OCI-LY7 (cell line): ENCODE measurements at regions of chr22 and their contacts with region 1.

Region 1: GRCh38 chr22:33271390-33272161 is 213.4 kb upstream of the SYN3 start:
- DNase-seq: peak; percentile 99
- H3K4me3 ChIP-seq: peak overlapping the region; percentile 53
- H3K27ac ChIP-seq: peak overlapping the region; percentile 99
- H3K4me1 ChIP-seq: peaks cover 74% of the 10 kb centered on the region
- CTCF ChIP-seq: peak; percentile 45

Region 2: DNA sequence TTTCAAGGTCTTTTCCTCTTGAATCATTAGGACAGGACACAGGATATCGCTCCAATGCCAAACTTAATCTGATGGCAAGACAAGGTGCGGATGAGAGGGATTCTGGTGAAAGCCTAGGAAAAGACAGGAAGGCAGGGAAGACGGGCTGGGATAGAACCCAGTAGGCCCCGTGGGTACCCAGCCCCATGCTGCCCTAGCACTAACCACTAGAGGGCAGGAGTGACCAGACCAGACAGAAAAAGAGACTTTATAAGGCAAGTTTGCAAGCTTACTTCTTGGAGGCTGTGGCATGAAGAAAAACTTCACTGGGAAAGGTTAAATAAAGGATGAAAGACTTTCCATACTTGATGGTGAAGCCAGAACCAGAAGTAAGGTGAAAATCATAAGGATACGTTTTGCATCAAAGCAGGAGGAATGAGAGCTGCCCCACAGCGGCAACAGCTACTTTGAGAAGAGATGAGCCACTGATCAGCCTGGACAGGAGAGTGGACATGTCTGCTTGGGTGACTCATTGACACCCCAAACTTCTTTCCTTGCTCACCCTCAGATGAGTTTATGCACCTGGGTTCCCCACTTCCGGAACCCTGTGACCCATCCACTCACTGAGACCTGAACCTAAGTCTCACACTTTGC is 253.2 kb before region 1 on chr22:
- CTCF ChIA-PET with region 1: no interaction called
- POLR2A ChIA-PET with region 1: no interaction called
- intact Hi-C with region 1: loop called (anchors 5 kb)
- DNase-seq: peak; percentile 71
- H3K4me3 ChIP-seq: no peak overlapping the region
- H3K27ac ChIP-seq: no peak overlapping the region
- H3K4me1 ChIP-seq: peaks cover 18% of the 10 kb centered on the region
- CTCF ChIP-seq: peak; percentile 98

Region 3: DNA sequence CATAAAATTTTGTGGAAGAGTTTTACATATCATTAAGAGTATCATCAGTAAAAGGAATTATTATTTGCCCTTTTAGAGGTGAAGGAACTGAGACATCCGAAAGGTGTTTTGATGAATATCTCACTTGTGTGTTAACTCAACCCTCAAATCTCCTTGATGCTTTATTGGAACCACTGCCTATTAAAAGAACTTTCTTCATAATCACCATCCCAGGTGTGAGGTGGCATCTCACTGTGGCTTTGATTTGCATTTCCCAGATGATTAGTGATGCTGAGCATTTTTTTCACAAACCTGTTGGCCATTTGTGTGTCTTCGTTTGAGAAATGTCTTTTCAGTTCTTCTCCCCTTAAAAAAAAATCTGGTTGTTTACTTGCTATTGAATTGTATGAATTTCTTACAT is 79.4 kb before region 1 on chr22:
- CTCF ChIA-PET with region 1: no interaction called
- POLR2A ChIA-PET with region 1: interaction called, 4 read pairs
- intact Hi-C with region 1: loop called (anchors 1 kb)
- DNase-seq: peak; percentile 96
- H3K4me3 ChIP-seq: peak overlapping the region; percentile 49
- H3K27ac ChIP-seq: peak overlapping the region; percentile 98
- H3K4me1 ChIP-seq: peaks cover 70% of the 10 kb centered on the region
- CTCF ChIP-seq: no peak

Region 4: DNA sequence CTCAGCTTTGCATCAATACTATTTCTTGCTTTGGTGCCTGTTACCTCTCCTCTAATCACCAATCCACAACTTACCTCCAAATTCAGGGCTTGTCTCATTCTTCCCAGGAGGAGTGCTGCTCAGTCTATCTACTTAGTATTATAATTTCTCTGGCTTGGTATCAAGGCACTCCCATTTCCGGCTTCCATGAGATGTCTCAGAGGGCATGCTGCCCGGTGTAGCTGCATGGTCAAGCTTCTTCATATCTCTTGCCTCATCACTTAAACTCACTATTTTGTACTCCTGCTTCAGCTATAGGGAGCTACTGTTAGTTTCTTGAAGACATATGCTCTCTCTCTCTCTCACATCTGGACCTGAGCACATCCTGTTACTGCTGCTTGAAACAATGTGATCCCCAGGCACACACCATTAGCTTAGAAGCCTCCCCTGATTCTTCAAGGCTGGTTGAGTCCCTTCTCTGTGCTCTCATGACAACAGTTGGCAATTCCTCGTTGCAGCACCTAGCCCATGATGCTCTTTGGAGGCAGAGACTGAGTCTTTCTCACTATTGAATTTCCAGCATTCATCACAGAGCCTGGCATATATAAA is 30.6 kb before region 1 on chr22:
- CTCF ChIA-PET with region 1: interaction called, 3 read pairs
- POLR2A ChIA-PET with region 1: interaction called, 7 read pairs
- intact Hi-C with region 1: loop called (anchors 5 kb)
- DNase-seq: peak; percentile 62
- H3K4me3 ChIP-seq: no peak overlapping the region
- H3K27ac ChIP-seq: peak overlapping the region; percentile 23
- H3K4me1 ChIP-seq: peaks cover 45% of the 10 kb centered on the region
- CTCF ChIP-seq: no peak

Region 5: DNA sequence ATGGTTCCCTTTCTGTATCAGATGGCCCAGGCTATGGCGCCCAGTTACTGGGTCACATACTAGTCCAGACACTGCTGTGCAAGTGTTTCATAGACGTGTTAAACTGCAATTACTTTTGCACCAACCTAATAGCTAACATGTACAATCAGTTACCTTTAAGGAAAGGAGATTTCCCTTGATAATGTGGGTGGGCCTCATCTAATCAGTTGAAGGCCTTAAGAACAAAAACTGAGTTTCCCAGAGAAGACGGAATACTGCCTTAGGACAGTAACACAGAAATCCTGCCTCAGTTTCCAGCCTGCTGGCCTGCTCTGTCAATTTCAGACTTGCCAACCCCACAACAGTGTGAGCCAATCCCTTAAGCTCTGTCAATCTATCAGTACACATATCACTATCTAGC is 16.5 kb after region 1 on chr22:
- CTCF ChIA-PET with region 1: interaction called, 3 read pairs
- POLR2A ChIA-PET with region 1: interaction called, 29 read pairs
- intact Hi-C with region 1: no loop called
- DNase-seq: no peak
- H3K4me3 ChIP-seq: no peak overlapping the region
- H3K27ac ChIP-seq: no peak overlapping the region
- H3K4me1 ChIP-seq: no peaks in the 10 kb centered on the region
- CTCF ChIP-seq: no peak

Region 6: DNA sequence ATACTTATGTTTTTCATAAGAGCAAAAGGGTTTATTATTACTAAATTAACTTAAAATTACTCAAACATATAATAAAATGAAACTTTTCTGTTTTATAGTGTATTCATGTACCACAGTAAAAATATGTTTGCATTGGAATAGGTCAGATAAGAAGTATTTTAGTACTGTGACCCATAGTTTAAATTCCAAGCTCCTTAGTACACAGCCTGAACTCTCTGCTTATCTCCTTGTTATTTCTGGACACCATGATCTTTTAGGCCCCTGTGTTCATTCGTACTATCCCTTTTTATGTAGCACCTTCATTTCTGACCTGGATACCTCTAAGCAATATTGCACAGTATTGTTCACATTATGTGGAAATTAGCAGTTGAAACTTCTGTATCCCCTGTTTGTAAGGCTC is 83.4 kb after region 1 on chr22:
- CTCF ChIA-PET with region 1: no interaction called
- POLR2A ChIA-PET with region 1: no interaction called
- intact Hi-C with region 1: no loop called
- DNase-seq: no peak
- H3K4me3 ChIP-seq: no peak overlapping the region
- H3K27ac ChIP-seq: no peak overlapping the region
- H3K4me1 ChIP-seq: no peaks in the 10 kb centered on the region
- CTCF ChIP-seq: no peak

Region 7: DNA sequence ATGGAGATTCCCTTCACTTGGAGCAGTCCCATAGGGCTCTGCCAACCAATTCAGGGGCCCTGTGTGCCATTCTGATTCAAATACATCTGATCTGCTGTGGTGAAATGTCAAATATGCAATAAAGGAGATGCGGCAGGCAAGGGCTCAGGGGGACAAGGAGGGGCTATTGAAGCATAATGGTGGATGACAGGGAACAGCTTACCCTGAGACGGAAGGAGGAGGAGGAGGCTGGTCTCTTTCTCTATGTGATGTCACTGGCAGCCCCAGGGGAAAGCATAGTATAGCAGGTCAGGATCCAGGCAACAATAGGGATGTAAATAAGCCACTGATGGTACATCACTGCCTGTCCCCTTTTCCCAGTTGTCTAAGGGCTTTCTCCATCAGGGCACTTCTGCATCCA is 137.5 kb after region 1 on chr22:
- CTCF ChIA-PET with region 1: no interaction called
- POLR2A ChIA-PET with region 1: no interaction called
- intact Hi-C with region 1: no loop called
- DNase-seq: no peak
- H3K4me3 ChIP-seq: no peak overlapping the region
- H3K27ac ChIP-seq: no peak overlapping the region
- H3K4me1 ChIP-seq: peaks cover 3% of the 10 kb centered on the region
- CTCF ChIP-seq: no peak

Region 8: GRCh38 chr22:33841281-33842005 is 569.9 kb after region 1 on chr22:
- CTCF ChIA-PET with region 1: no interaction called
- POLR2A ChIA-PET with region 1: no interaction called
- intact Hi-C with region 1: loop called (anchors 2 kb)
- DNase-seq: peak; percentile 76
- H3K4me3 ChIP-seq: peak overlapping the region; percentile 60
- H3K27ac ChIP-seq: peak overlapping the region; percentile 93
- H3K4me1 ChIP-seq: peaks cover 59% of the 10 kb centered on the region
- CTCF ChIP-seq: no peak